ENCODE measurements at regions of chr10 and their contacts with region 1.

Region 1: DNA sequence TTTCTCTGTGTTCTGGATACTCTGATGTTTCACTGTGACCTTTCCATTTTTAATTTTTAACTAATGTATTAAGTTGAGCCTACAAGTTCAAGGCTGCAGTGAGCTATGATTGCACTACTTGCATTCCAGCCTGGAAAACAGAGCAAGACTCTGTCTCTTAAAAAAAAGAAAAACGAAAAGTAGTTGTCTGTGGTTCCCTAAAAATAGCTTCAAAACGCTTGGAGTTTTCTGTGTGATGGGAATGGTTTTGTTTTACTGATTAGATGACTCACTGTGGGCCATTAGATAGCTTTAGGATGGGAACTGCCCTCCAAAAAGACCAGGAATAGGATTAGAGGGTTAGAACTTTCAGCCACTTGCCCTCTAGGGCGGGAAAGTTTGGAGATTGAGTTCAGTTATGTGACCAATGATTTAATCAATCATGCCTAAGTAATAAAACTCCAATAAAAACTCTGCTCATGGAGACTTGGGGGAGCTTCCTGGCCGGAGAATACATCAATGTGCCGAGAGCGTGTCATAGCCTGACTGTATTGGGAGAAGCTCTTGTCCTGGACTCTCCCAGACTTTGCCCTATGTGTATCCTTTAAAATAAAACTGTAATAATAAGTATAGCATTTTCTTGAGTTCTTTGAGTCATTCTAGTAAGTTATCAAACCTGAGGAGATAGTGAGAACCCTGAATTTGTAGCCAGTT is 147.1 kb downstream of the LYZL1 start:
- DNase-seq: peak; percentile 75
- ATAC-seq: peak; percentile 59; the same call in 1 of the 2 replicates
- H3K4me3 ChIP-seq: no peak overlapping the region
- H3K27ac ChIP-seq: no peak overlapping the region
- H3K4me1 ChIP-seq: peaks cover 2% of the 10 kb centered on the region; the same call in 1 of the 2 replicates
- H3K27me3 ChIP-seq: no peaks in the 10 kb centered on the region
- CTCF ChIP-seq: no peak
- POLR2A ChIP-seq: no peak
- RAD21 ChIP-seq: no peak

Region 2: GRCh38 chr10:29415876-29416275 is 20.1 kb before region 1 on chr10:
- CTCF ChIA-PET with region 1: interaction called, 3 read pairs
- POLR2A ChIA-PET with region 1: interaction called, 11 read pairs
- dilution Hi-C with region 1: no loop called
- in situ Hi-C with region 1: no loop called
- intact Hi-C with region 1: no loop called
- DNase-seq: peak; percentile 29
- ATAC-seq: no peak
- H3K4me3 ChIP-seq: no peak overlapping the region
- H3K27ac ChIP-seq: no peak overlapping the region
- H3K4me1 ChIP-seq: 0 out of 2 replicates have a peak, but pooled peaks cover 2% of the 10 kb centered on the region
- H3K27me3 ChIP-seq: no peaks in the 10 kb centered on the region
- CTCF ChIP-seq: no peak
- POLR2A ChIP-seq: no peak
- RAD21 ChIP-seq: no peak

Measured in IMR-90 (cell line).